ENCODE measurements at regions of chr10 and their contacts with region 1.

Region 1: GRCh38 chr10:102009801-102010425 is 46.1 kb downstream of the ARMH3 start:
- DNase-seq: peak in 10 of 14 experiments; percentile 2 to 74 (median 23)
- ATAC-seq: peak; percentile 91
- H3K4me3 ChIP-seq: no peak overlapping the region
- H3K4me3 Mint-ChIP-seq: no peak overlapping the region
- H3K27ac ChIP-seq: no peak overlapping the region
- H3K27ac Mint-ChIP-seq: peak overlapping the region; percentile 0
- H3K4me1 ChIP-seq: no peaks in the 10 kb centered on the region
- H3K4me1 Mint-ChIP-seq: peaks cover 5% of the 10 kb centered on the region
- H3K27me3 ChIP-seq: no peaks in the 10 kb centered on the region
- H3K27me3 Mint-ChIP-seq: no peaks in the 10 kb centered on the region
- CTCF ChIP-seq: peak; percentile 74

Region 2: GRCh38 chr10:101425535-101425934 is 584.4 kb before region 1 on chr10:
- CTCF ChIA-PET with region 1: no interaction called
- POLR2A ChIA-PET with region 1: no interaction called
- intact Hi-C with region 1: no loop called
- DNase-seq: no peak
- ATAC-seq: no peak
- H3K4me3 ChIP-seq: no peak overlapping the region
- H3K4me3 Mint-ChIP-seq: no peak overlapping the region
- H3K27ac ChIP-seq: no peak overlapping the region
- H3K27ac Mint-ChIP-seq: no peak overlapping the region
- H3K4me1 ChIP-seq: peaks cover under 1% of the 10 kb centered on the region
- H3K4me1 Mint-ChIP-seq: peaks cover 29% of the 10 kb centered on the region
- H3K27me3 ChIP-seq: no peaks in the 10 kb centered on the region
- H3K27me3 Mint-ChIP-seq: no peaks in the 10 kb centered on the region
- CTCF ChIP-seq: no peak

Region 3: GRCh38 chr10:101889256-101890210 is 120.4 kb before region 1 on chr10:
- CTCF ChIA-PET with region 1: interaction called, 9 read pairs
- POLR2A ChIA-PET with region 1: interaction called, 3 read pairs
- intact Hi-C with region 1: loop called (anchors 1 to 10 kb)
- DNase-seq: peak; percentile 42 to 74 (median 62)
- ATAC-seq: peak; percentile 56
- H3K4me3 ChIP-seq: no peak overlapping the region
- H3K4me3 Mint-ChIP-seq: no peak overlapping the region
- H3K27ac ChIP-seq: no peak overlapping the region
- H3K27ac Mint-ChIP-seq: no peak overlapping the region
- H3K4me1 ChIP-seq: no peaks in the 10 kb centered on the region
- H3K4me1 Mint-ChIP-seq: no peaks in the 10 kb centered on the region
- H3K27me3 ChIP-seq: no peaks in the 10 kb centered on the region
- H3K27me3 Mint-ChIP-seq: no peaks in the 10 kb centered on the region
- CTCF ChIP-seq: peak; percentile 79

Region 4: GRCh38 chr10:102020938-102021337 is 11.0 kb after region 1 on chr10:
- CTCF ChIA-PET with region 1: interaction called, 10 read pairs
- POLR2A ChIA-PET with region 1: no interaction called
- intact Hi-C with region 1: no loop called
- DNase-seq: peak in 2 of 14 experiments; percentile 6 to 20
- ATAC-seq: no peak
- H3K4me3 ChIP-seq: no peak overlapping the region
- H3K4me3 Mint-ChIP-seq: no peak overlapping the region
- H3K27ac ChIP-seq: no peak overlapping the region
- H3K27ac Mint-ChIP-seq: no peak overlapping the region
- H3K4me1 ChIP-seq: peaks cover 4% of the 10 kb centered on the region
- H3K4me1 Mint-ChIP-seq: no peaks in the 10 kb centered on the region
- H3K27me3 ChIP-seq: no peaks in the 10 kb centered on the region
- H3K27me3 Mint-ChIP-seq: no peaks in the 10 kb centered on the region
- CTCF ChIP-seq: no peak